CD4-positive, alpha-beta memory T cell (primary cell): ENCODE measurements at regions of chr14 and their contacts with region 1.

Region 1: GRCh38 chr14:51780006-51780692 is 80.3 kb upstream of the GNG2 start:
- DNase-seq: peak; percentile 64 to 70 (median 69)
- H3K4me3 ChIP-seq: no peak overlapping the region
- H3K4me3 Mint-ChIP-seq: peak overlapping the region in 1 of 8 donors; percentile 71
- H3K27ac ChIP-seq: no peak overlapping the region
- H3K27ac Mint-ChIP-seq: peak overlapping the region in 2 of 7 donors; percentile 2 to 75
- H3K4me1 ChIP-seq: peaks cover 8% of the 10 kb centered on the region
- H3K4me1 Mint-ChIP-seq: peaks cover 12 to 16% (median 13%) of the 10 kb centered on the region in 4 donors
- H3K27me3 ChIP-seq: no peaks in the 10 kb centered on the region
- H3K27me3 Mint-ChIP-seq: peaks cover 18 to 21% of the 10 kb centered on the region in 2 donors

Region 2: DNA sequence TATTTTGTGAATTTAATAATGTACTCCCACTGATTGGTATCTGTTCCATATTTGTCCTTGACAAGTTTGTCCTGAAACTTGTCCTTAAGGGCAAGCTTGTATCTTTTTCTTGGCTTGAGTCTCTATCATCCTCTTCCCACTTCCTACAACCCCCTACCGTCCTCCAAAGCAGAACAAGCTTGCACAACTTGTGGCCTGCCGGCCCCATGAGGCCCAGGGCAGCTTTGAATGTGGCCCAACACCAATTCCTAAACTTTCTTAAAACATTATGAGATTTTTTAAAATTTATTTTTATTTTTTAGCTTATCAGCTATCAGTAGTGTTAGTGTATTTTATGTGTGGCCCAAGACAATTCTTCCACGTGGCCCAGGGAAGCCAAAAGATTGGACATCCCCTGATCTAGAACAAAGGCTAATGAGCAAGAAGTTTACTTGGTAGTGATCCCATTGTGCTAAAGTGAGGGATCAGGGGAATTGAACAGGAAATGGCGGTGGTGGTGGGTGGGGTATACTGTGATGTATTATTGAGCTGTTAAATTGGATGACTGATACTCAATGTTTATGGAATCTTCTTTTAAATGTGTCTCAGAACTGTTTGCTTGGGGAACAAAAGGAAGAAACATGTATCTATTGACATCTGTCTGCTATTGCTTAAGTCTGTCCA is 502.3 kb before region 1 on chr14:
- CTCF ChIA-PET with region 1: interaction called, 81 read pairs
- POLR2A ChIA-PET with region 1: no interaction called
- intact Hi-C with region 1: loop called (anchors 1 kb)
- DNase-seq: no peak
- H3K4me3 ChIP-seq: no peak overlapping the region
- H3K4me3 Mint-ChIP-seq: no peak overlapping the region
- H3K27ac ChIP-seq: no peak overlapping the region
- H3K27ac Mint-ChIP-seq: no peak overlapping the region
- H3K4me1 ChIP-seq: no peaks in the 10 kb centered on the region
- H3K4me1 Mint-ChIP-seq: no peaks in the 10 kb centered on the region
- H3K27me3 ChIP-seq: no peaks in the 10 kb centered on the region
- H3K27me3 Mint-ChIP-seq: no peaks in the 10 kb centered on the region

Region 3: GRCh38 chr14:51283402-51284085 is 496.6 kb before region 1 on chr14:
- CTCF ChIA-PET with region 1: interaction called, 81 read pairs
- POLR2A ChIA-PET with region 1: no interaction called
- intact Hi-C with region 1: loop called (anchors 1 kb)
- DNase-seq: peak in 4 of 5 donors; percentile 11 to 40 (median 30)
- H3K4me3 ChIP-seq: no peak overlapping the region
- H3K4me3 Mint-ChIP-seq: no peak overlapping the region
- H3K27ac ChIP-seq: no peak overlapping the region
- H3K27ac Mint-ChIP-seq: no peak overlapping the region
- H3K4me1 ChIP-seq: no peaks in the 10 kb centered on the region
- H3K4me1 Mint-ChIP-seq: peaks cover 0 to 6% (median 3%) of the 10 kb centered on the region in 4 donors
- H3K27me3 ChIP-seq: no peaks in the 10 kb centered on the region
- H3K27me3 Mint-ChIP-seq: no peaks in the 10 kb centered on the region

Region 4: GRCh38 chr14:51369814-51370213 is 410.3 kb before region 1 on chr14:
- CTCF ChIA-PET with region 1: interaction called, 4 read pairs
- POLR2A ChIA-PET with region 1: no interaction called
- intact Hi-C with region 1: loop called (anchors 1 kb)
- DNase-seq: no peak
- H3K4me3 ChIP-seq: no peak overlapping the region
- H3K4me3 Mint-ChIP-seq: no peak overlapping the region
- H3K27ac ChIP-seq: no peak overlapping the region
- H3K27ac Mint-ChIP-seq: no peak overlapping the region
- H3K4me1 ChIP-seq: no peaks in the 10 kb centered on the region
- H3K4me1 Mint-ChIP-seq: no peaks in the 10 kb centered on the region
- H3K27me3 ChIP-seq: no peaks in the 10 kb centered on the region
- H3K27me3 Mint-ChIP-seq: peaks cover 7 to 13% of the 10 kb centered on the region in 2 donors

Region 5: GRCh38 chr14:51554953-51555352 is 225.2 kb before region 1 on chr14:
- CTCF ChIA-PET with region 1: no interaction called
- POLR2A ChIA-PET with region 1: no interaction called
- intact Hi-C with region 1: loop called (anchors 1 kb)
- DNase-seq: peak in 1 of 5 donors; percentile 16
- H3K4me3 ChIP-seq: no peak overlapping the region
- H3K4me3 Mint-ChIP-seq: no peak overlapping the region
- H3K27ac ChIP-seq: no peak overlapping the region
- H3K27ac Mint-ChIP-seq: no peak overlapping the region
- H3K4me1 ChIP-seq: no peaks in the 10 kb centered on the region
- H3K4me1 Mint-ChIP-seq: no peaks in the 10 kb centered on the region
- H3K27me3 ChIP-seq: no peaks in the 10 kb centered on the region
- H3K27me3 Mint-ChIP-seq: peaks cover 2 to 12% of the 10 kb centered on the region in 2 donors

Region 6: DNA sequence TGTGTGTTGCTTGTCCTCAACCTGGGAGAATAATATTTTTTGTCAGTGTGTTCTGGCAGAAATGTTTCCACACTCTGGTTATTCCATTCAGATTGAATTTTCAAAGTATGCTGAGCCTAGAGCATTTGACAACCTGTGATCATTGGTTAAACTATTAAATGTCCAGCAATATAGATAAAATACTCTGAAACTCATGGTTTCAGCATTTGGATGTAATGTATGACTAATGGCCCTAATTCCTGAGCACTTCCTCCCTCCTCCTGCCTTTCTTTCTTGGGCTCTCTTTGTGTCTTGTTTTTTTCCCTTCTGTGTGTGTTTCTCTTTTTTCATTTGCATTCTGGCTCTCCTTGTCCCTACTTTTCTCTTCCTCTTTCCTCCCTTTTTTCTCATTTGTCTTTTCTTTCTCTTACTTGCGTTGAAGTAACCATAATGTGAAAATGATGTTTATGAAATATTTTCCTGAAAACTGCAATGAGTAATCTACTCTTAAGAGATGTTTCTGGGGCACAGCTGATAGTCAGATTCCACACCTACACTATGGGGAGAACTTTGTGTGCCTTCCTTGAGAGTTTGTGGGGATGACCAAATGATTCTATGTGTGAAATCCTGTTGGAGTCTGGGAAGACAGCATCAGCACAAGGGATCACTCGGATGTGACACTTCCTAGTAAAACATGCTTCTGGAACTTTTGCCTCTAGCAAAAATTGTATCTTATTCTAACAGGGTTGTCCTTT is 53.8 kb before region 1 on chr14:
- CTCF ChIA-PET with region 1: no interaction called
- POLR2A ChIA-PET with region 1: no interaction called
- intact Hi-C with region 1: no loop called
- DNase-seq: no peak
- H3K4me3 ChIP-seq: no peak overlapping the region
- H3K4me3 Mint-ChIP-seq: no peak overlapping the region
- H3K27ac ChIP-seq: no peak overlapping the region
- H3K27ac Mint-ChIP-seq: peak overlapping the region in 3 of 7 donors; percentile 8 to 26 (median 16)
- H3K4me1 ChIP-seq: no peaks in the 10 kb centered on the region
- H3K4me1 Mint-ChIP-seq: no peaks in the 10 kb centered on the region
- H3K27me3 ChIP-seq: no peaks in the 10 kb centered on the region
- H3K27me3 Mint-ChIP-seq: no peaks in the 10 kb centered on the region

Region 7: GRCh38 chr14:51828017-51828797 is 48.1 kb after region 1 on chr14:
- CTCF ChIA-PET with region 1: interaction called, 10 read pairs
- POLR2A ChIA-PET with region 1: no interaction called
- intact Hi-C with region 1: no loop called
- DNase-seq: peak; percentile 30 to 80 (median 41)
- H3K4me3 ChIP-seq: no peak overlapping the region
- H3K4me3 Mint-ChIP-seq: peak overlapping the region in 2 of 8 donors; percentile 3 to 23
- H3K27ac ChIP-seq: no peak overlapping the region
- H3K27ac Mint-ChIP-seq: peak overlapping the region in 2 of 7 donors; percentile 12 to 24
- H3K4me1 ChIP-seq: peaks cover 19% of the 10 kb centered on the region
- H3K4me1 Mint-ChIP-seq: peaks cover 0 to 4% (median 0%) of the 10 kb centered on the region in 4 donors
- H3K27me3 ChIP-seq: no peaks in the 10 kb centered on the region
- H3K27me3 Mint-ChIP-seq: peaks cover 0 to 2% of the 10 kb centered on the region in 2 donors

Region 8: GRCh38 chr14:51979088-51979709 is 199.1 kb after region 1 on chr14:
- CTCF ChIA-PET with region 1: interaction called, 78 read pairs
- POLR2A ChIA-PET with region 1: interaction called, 4 read pairs
- intact Hi-C with region 1: loop called (anchors 1 kb)
- DNase-seq: peak; percentile 71 to 76 (median 73)
- H3K4me3 ChIP-seq: no peak overlapping the region
- H3K4me3 Mint-ChIP-seq: peak overlapping the region in 1 of 8 donors; percentile 34
- H3K27ac ChIP-seq: no peak overlapping the region
- H3K27ac Mint-ChIP-seq: peak overlapping the region in 2 of 7 donors; percentile 47 to 48
- H3K4me1 ChIP-seq: peaks cover 7% of the 10 kb centered on the region
- H3K4me1 Mint-ChIP-seq: peaks cover 0 to 6% (median 5%) of the 10 kb centered on the region in 4 donors
- H3K27me3 ChIP-seq: no peaks in the 10 kb centered on the region
- H3K27me3 Mint-ChIP-seq: no peaks in the 10 kb centered on the region